ENCODE measurements at regions of chr9 and their contacts with region 1.

Region 1: GRCh38 chr9:32579706-32580331 is 6.9 kb upstream of the NDUFB6 start:
- DNase-seq: no peak
- ATAC-seq: peak; percentile 73
- H3K4me3 ChIP-seq: no peak overlapping the region
- H3K27ac ChIP-seq: no peak overlapping the region
- H3K4me1 ChIP-seq: peaks cover 4% of the 10 kb centered on the region; the same call in 1 of the 2 replicates
- H3K27me3 ChIP-seq: no peaks in the 10 kb centered on the region
- CTCF ChIP-seq: peak; percentile 85 to 93 (median 91)
- EP300 ChIP-seq: no peak
- POLR2A ChIP-seq: no peak
- RAD21 ChIP-seq: peak; percentile 83

Region 2: GRCh38 chr9:32398207-32398606 is 181.6 kb before region 1 on chr9:
- CTCF ChIA-PET with region 1: interaction called, 13 read pairs
- POLR2A ChIA-PET with region 1: no interaction called
- RAD21 ChIA-PET with region 1: interaction called, 3 read pairs
- SMC1A ChIA-PET with region 1: interaction called, 7 read pairs
- in situ Hi-C with region 1: no loop called
- intact Hi-C with region 1: no loop called
- DNase-seq: no peak
- ATAC-seq: no peak
- H3K4me3 ChIP-seq: no peak overlapping the region
- H3K27ac ChIP-seq: no peak overlapping the region
- H3K4me1 ChIP-seq: peaks cover 3% of the 10 kb centered on the region; the same call in 1 of the 2 replicates
- H3K27me3 ChIP-seq: no peaks in the 10 kb centered on the region
- CTCF ChIP-seq: no peak
- EP300 ChIP-seq: no peak
- POLR2A ChIP-seq: no peak
- RAD21 ChIP-seq: no peak

Region 3: GRCh38 chr9:32526041-32526706 is 53.6 kb before region 1 on chr9 and contains the start of gene RIGI:
- CTCF ChIA-PET with region 1: interaction called, 20 read pairs
- POLR2A ChIA-PET with region 1: no interaction called
- RAD21 ChIA-PET with region 1: interaction called, 7 read pairs
- SMC1A ChIA-PET with region 1: interaction called, 6 read pairs
- in situ Hi-C with region 1: no loop called
- intact Hi-C with region 1: no loop called
- DNase-seq: peak; percentile 51
- ATAC-seq: peak; percentile 76
- H3K4me3 ChIP-seq: peak within 1 kb of the TSS; percentile 98
- H3K27ac ChIP-seq: peak within 1 kb of the TSS; percentile 84
- H3K4me1 ChIP-seq: no peaks in the 10 kb centered on the region; the same call in 1 of the 2 replicates
- H3K27me3 ChIP-seq: no peaks in the 10 kb centered on the region
- CTCF ChIP-seq: peak; percentile 24 to 39 (median 34); a peak in 5 of 6 replicates
- EP300 ChIP-seq: no peak
- POLR2A ChIP-seq: peak; percentile 62
- RAD21 ChIP-seq: peak; percentile 21; the same call in 1 of the 2 replicates
- polyA plus RNA-seq, gene RIGI: 6.3 to 7.2 TPM

Region 4: DNA sequence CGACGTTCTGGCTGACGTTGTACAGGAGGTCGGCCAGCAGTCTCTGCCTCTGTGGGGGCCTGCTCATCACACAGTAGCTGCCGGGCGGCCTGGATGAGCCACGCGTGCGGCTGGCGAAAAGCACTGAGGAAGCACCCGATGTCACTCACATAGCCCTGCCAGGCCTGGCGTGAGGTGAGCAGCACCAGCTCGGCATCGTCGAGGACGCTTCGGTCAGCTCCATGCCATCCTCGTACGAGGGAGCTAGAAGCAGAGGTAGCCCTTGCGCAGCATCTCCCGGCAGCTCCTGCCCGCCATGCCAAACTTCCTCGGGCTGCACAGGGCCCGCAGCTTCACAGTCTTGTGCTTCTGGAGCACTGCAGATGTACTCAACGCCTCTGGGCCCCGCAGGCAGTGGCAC is 13.0 kb before region 1 on chr9:
- CTCF ChIA-PET with region 1: interaction called, 25 read pairs
- POLR2A ChIA-PET with region 1: no interaction called
- RAD21 ChIA-PET with region 1: interaction called, 3 read pairs
- SMC1A ChIA-PET with region 1: interaction called, 18 read pairs
- in situ Hi-C with region 1: no loop called
- intact Hi-C with region 1: no loop called
- DNase-seq: no peak
- ATAC-seq: no peak
- H3K4me3 ChIP-seq: no peak overlapping the region
- H3K27ac ChIP-seq: no peak overlapping the region
- H3K4me1 ChIP-seq: no peaks in the 10 kb centered on the region; the same call in 1 of the 2 replicates
- H3K27me3 ChIP-seq: no peaks in the 10 kb centered on the region
- CTCF ChIP-seq: no peak
- EP300 ChIP-seq: no peak
- POLR2A ChIP-seq: no peak
- RAD21 ChIP-seq: no peak

Region 5: DNA sequence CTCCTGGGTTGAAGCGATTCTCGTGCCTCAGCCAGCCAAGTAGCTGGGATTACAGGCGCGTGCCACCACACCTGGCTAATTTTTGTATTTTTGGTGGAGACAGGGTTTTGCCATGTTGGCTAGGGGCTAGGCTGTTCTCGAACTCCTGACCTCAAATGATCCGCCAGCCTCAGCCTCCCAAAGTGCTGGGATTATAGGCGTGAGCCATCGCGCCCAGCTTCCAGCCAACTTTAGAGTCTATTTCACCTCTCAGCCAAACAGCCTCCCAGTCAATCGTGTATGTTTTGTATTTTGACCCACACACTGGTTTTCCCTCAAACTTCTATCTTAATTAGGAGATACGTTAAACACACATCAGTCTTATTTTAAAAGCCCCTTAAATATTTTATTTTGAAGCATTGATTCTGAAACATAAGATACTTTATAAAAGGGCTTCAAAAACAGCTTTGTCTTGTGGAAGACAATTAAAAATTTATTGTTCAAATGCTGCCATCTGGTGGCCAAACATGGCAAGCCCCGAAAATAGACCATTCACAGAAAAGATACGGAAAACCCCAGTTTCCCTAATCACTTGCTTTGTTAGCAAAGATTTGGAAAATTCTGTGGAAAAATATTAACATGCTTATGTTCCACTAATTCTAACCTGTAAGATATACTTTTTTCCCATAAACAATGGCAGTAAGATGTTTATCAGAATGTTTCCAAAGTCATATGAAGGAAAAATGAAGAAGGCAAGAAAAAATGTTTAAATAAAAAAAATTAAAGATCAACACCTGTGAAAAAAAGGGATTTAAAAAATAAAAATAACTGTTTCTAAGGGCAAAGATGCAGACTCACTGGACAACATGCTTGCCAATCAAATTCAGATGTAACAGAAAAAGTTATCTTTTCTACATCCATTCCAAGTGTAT is 388.5 kb after region 1 on chr9:
- CTCF ChIA-PET with region 1: interaction called, 111 read pairs
- POLR2A ChIA-PET with region 1: no interaction called
- RAD21 ChIA-PET with region 1: interaction called, 44 read pairs
- SMC1A ChIA-PET with region 1: interaction called, 19 read pairs
- in situ Hi-C with region 1: loop called (anchors 5 kb)
- intact Hi-C with region 1: loop called (anchors 1 kb)
- DNase-seq: no peak
- ATAC-seq: peak; percentile 61
- H3K4me3 ChIP-seq: no peak overlapping the region
- H3K27ac ChIP-seq: no peak overlapping the region
- H3K4me1 ChIP-seq: no peaks in the 10 kb centered on the region
- H3K27me3 ChIP-seq: no peaks in the 10 kb centered on the region
- CTCF ChIP-seq: peak; percentile 61 to 73 (median 72)
- EP300 ChIP-seq: no peak
- POLR2A ChIP-seq: no peak
- RAD21 ChIP-seq: peak; percentile 75